ENCODE measurements at regions of chr19 and their contacts with region 1.

Region 1: DNA sequence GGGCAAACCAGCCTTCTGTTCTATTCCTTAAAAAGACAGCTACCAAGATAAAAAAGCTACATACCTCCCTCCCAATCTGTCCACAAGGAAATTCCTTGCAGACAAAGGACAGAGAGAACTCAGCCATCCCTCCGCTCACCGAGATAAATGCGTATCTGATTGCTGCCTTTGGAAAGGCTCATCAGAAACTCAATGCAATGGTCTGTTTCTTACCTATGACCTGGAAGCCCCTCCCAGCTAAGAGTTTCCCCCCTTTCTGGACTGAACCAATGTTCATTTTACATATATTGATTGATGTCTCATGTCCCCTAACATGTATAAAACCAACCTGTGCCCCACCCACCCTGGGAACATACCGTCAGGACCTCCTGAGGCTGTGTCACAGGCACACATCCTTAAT is 11.6 kb downstream of the BTBD2 start:
- DNase-seq: no peak
- ATAC-seq: no peak
- H3K4me3 ChIP-seq: no peak overlapping the region
- H3K27ac ChIP-seq: no peak overlapping the region
- H3K4me1 ChIP-seq: no peaks in the 10 kb centered on the region
- H3K27me3 ChIP-seq: no peaks in the 10 kb centered on the region
- CTCF ChIP-seq: no peak

Region 2: DNA sequence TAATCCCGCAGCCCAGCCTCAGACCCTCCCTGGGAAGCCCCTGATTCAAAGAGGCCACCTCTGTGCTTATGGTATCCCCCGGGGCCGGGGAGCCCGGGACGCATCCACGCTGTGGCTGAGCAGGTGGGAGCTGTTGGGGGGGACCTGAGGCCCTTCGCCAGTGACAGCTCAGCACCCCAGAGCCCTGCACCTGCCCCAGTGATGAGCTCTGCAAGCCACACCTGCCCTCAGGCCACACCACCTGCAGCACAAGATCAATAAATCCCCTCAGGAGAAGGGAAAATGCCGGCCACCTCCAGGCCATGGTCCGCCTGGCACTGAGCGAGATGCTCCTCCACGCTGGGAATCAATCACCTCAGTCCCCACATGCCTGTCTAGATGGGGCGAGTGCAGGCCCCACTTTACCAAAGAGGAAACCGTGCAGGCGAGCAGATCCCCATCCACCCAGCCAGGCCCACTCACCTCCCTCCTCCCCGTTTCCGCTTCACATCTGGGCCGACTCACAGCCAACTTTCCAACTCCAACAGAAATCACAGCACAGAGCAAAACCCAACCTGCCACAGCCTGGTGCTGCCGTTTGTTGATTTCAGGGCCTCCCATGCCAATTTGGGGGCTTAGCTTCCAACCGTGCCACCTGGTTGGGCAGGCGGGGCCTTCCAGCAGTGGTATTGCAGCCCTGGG is 79.4 kb after region 1 on chr19:
- CTCF ChIA-PET with region 1: no interaction called
- POLR2A ChIA-PET with region 1: interaction called, 10 read pairs
- in situ Hi-C with region 1: no loop called
- intact Hi-C with region 1: no loop called
- DNase-seq: no peak
- ATAC-seq: no peak
- H3K4me3 ChIP-seq: no peak overlapping the region
- H3K27ac ChIP-seq: no peak overlapping the region
- H3K4me1 ChIP-seq: no peaks in the 10 kb centered on the region
- H3K27me3 ChIP-seq: no peaks in the 10 kb centered on the region
- CTCF ChIP-seq: no peak

Region 3: GRCh38 chr19:2097330-2098283 is 93.7 kb after region 1 on chr19:
- CTCF ChIA-PET with region 1: no interaction called
- POLR2A ChIA-PET with region 1: no interaction called
- in situ Hi-C with region 1: no loop called
- intact Hi-C with region 1: no loop called
- DNase-seq: no peak
- ATAC-seq: no peak
- H3K4me3 ChIP-seq: peak overlapping the region; percentile 44 to 56
- H3K27ac ChIP-seq: no peak overlapping the region
- H3K4me1 ChIP-seq: 0 out of 2 replicates have a peak, but pooled peaks cover 3% of the 10 kb centered on the region
- H3K27me3 ChIP-seq: no peaks in the 10 kb centered on the region
- CTCF ChIP-seq: no peak

Region 4: GRCh38 chr19:2269244-2269947 is 265.5 kb after region 1 on chr19:
- CTCF ChIA-PET with region 1: no interaction called
- POLR2A ChIA-PET with region 1: no interaction called
- in situ Hi-C with region 1: no loop called
- intact Hi-C with region 1: no loop called
- DNase-seq: no peak
- ATAC-seq: peak; percentile 84
- H3K4me3 ChIP-seq: peak overlapping the region; percentile 71 to 89
- H3K27ac ChIP-seq: peak overlapping the region; percentile 93
- H3K4me1 ChIP-seq: peaks cover 18% of the 10 kb centered on the region
- H3K27me3 ChIP-seq: no peaks in the 10 kb centered on the region
- CTCF ChIP-seq: no peak